Esophagus muscularis mucosa (tissue), 4 donors: ENCODE measurements at regions of chr9 and their contacts with region 1.

Region 1: GRCh38 chr9:123544007-123544827 is 188.2 kb downstream of the CRB2 start:
- DNase-seq: no peak
- H3K4me3 ChIP-seq: no peak overlapping the region
- H3K27ac ChIP-seq: no peak overlapping the region
- H3K4me1 ChIP-seq: peaks cover 7 to 21% (median 20%) of the 10 kb centered on the region in 4 donors
- H3K27me3 ChIP-seq: no peaks in the 10 kb centered on the region
- CTCF ChIP-seq: peak; percentile 73 to 76 (median 75)
- EP300 ChIP-seq: no peak
- POLR2A ChIP-seq: no peak

Region 2: DNA sequence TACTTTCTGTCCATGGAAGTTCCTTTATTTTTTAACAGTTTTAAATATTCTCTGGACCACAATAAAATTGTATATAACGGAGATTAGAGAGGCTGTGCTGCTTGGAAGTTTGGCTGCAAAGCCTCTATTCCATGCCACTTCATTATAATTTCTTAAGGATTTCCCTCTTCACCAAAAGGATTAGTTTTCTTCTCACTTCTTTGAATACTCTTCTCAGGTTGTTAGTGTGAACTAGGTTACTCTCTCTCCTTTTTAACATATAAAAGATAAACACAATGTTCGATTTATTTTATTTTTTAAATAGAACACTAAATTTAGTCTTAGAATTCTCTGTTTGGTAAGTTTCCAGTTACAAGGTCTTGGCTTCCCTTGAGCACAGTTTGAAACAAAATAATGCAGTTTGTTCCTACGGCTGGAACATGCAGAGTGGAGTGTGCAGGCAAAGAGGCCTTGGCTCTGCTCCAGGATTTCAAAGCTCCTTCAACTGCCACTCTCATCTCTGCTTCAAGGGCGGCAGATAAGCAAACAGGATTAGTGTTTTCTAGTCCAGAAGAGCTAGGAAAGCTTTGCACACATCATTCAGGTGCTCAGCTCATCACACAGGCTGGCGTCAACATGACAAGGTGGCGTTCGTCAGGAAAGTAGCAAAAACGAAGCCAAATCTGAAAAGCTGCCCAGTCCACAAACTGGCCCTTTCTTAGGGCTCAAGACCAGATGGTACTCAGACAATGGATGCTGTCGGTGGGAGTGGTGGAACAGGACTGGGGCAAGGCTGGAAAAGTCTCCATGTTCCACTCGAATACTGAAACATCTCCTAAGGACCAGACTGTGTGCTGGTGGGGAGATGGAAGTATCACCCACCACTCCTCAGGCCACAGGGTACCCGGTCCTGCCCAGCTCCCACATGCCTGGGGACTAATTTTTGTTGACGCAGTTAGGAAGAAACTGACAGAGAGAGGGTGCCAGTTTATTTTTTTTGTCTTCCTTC is 98.4 kb after region 1 on chr9:
- intact Hi-C with region 1: loop called (anchors 10 kb)
- DNase-seq: no peak
- H3K4me3 ChIP-seq: peak overlapping the region in 3 of 4 donors; percentile 5 to 27 (median 17)
- H3K27ac ChIP-seq: peak overlapping the region; percentile 50 to 60 (median 53)
- H3K4me1 ChIP-seq: peaks cover 19 to 43% (median 27%) of the 10 kb centered on the region in 4 donors
- H3K27me3 ChIP-seq: no peaks in the 10 kb centered on the region
- CTCF ChIP-seq: no peak
- EP300 ChIP-seq: no peak
- POLR2A ChIP-seq: no peak